Activated T-helper 2 cell treated with anti-CD3 and anti-CD28 coated beads, Interferon-gamma antibody, Interleukin-2, Interleukin-4, amounts not matched to agents 10 μg/mL and 5 μg/mL and 100 μg/mL, durations not matched to agents 14 hours and 24 hours and 36 hours (primary cell): ENCODE measurements at regions of chr3 and their contacts with region 1.

Region 1: DNA sequence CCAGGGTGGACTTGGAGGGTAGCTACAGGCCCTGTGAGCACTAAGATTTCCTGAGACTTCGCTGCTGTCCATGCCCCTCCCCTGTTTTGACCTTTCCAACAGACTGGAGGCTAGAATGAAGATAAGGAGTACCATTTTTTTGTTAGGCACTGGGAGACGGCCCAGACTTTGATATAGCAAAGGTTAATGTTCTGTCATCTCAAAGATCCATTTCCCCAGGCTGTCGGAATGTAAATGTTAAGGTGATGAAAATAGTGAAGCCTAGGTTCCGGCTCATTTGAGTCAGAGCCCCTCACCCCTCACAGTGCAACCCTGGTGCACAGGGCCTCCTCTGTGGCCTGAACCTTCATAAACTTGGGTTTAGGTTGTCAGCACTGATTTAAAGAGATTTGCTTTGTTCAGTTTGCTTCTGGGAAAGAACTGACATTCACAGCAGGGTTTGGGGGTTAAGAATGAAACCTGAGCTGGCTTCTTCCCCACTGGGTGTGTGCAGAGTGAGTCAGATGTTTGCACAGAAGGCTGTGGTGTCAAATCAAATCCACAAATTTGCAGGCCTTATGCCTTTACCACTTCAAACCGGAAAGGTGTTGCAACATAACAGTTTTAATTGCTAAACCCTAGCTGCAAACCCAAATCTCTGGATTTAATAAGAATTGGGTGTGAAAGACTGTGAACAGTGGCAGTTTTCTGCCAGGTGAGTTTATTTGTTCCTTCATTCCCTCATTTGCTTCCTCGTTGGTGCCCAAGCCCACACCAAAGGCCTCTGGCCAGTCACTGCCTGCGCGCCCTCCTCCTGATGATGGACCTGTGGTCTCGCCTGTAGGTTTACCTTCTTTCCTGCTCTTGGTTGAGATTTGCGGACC is 20.6 kb upstream of the KCTD6 start:
- DNase-seq: peak; percentile 62
- H3K4me3 Mint-ChIP-seq: no peak overlapping the region
- H3K27ac Mint-ChIP-seq: peak overlapping the region; percentile 76
- H3K4me1 Mint-ChIP-seq: peaks cover 48% of the 10 kb centered on the region
- H3K27me3 Mint-ChIP-seq: no peaks in the 10 kb centered on the region

Region 2: GRCh38 chr3:57221883-57222282 is 1249.4 kb before region 1 on chr3:
- intact Hi-C with region 1: no loop called
- DNase-seq: no peak
- H3K4me3 Mint-ChIP-seq: no peak overlapping the region
- H3K27ac Mint-ChIP-seq: no peak overlapping the region
- H3K4me1 Mint-ChIP-seq: peaks cover 10% of the 10 kb centered on the region
- H3K27me3 Mint-ChIP-seq: peaks cover 3% of the 10 kb centered on the region

Region 3: GRCh38 chr3:58433400-58434169 is 37.7 kb before region 1 on chr3 and contains the start of gene PDHB:
- intact Hi-C with region 1: loop called (anchors 5 kb)
- DNase-seq: peak; percentile 87
- H3K4me3 Mint-ChIP-seq: peak within 1 kb of the TSS; percentile 90
- H3K27ac Mint-ChIP-seq: peak within 1 kb of the TSS; percentile 90
- H3K4me1 Mint-ChIP-seq: peaks cover 36% of the 10 kb centered on the region
- H3K27me3 Mint-ChIP-seq: peaks cover 5% of the 10 kb centered on the region
- total RNA-seq, gene PDHB: 79.3 and 82.7 TPM in 2 replicates